HCT116 (cell line): ENCODE measurements at regions of chr1 and their contacts with region 1.

Region 1: DNA sequence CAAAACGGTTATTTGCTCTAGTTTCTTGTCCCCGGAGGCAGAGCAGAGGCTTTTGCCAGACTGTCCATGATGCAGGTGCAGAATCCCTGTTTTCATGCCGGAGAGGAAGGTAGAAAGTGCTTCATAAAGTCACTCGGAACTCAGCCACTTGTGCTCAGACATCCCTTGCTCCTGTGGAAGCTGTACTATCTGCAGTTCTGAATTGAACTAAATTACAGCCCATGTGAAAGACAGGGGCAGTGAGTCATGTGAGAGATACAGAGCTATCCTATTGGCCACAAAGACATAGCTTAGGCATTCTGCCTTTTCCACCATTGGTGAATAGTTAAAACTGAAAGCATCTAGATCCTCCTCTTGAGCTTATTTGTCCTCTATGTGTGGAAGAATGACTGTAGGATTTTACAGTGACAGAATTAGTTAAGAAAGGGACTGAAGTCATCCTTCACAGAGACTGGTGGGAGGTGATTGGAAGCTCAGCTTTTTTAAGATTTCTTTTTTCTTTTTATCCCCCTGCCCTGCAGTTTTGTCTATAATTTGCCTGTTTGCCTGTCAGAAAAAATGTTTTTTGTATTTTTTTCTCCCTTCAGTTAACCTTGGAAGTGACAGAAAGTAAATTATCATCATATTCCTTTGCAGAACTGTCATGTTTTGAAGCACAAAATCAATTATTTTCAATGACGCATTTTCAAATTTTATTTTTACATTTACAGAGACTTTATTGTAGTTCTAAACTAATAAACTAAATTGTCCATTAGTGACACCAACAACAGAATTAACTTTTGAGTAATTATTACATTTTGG is 298.6 kb downstream of the PTPRC start:
- DNase-seq: peak; percentile 76
- ATAC-seq: peak; percentile 77
- H3K4me3 ChIP-seq: peak overlapping the region; percentile 60 to 63
- H3K27ac ChIP-seq: peak overlapping the region; percentile 22; the same call in 1 of the 2 replicates
- H3K4me1 ChIP-seq: peaks cover 20 to 49% of the 10 kb centered on the region in 2 experiments
- H3K27me3 ChIP-seq: no peaks in the 10 kb centered on the region
- CTCF ChIP-seq: no peak
- POLR2A ChIP-seq: no peak
- RAD21 ChIP-seq: no peak

Region 2: GRCh38 chr1:198880818-198881597 is 56.4 kb before region 1 on chr1:
- CTCF ChIA-PET with region 1: no interaction called
- POLR2A ChIA-PET with region 1: interaction called, 4 read pairs
- RAD21 ChIA-PET with region 1: no interaction called
- intact Hi-C with region 1: loop called (anchors 1 kb)
- DNase-seq: peak; percentile 91
- ATAC-seq: peak; percentile 86
- H3K4me3 ChIP-seq: peak overlapping the region in 1 of 2 experiments; percentile 28; a peak in 1 of 4 replicates
- H3K27ac ChIP-seq: peak overlapping the region; percentile 67; the same call in 1 of the 2 replicates
- H3K4me1 ChIP-seq: peaks cover 17 to 25% of the 10 kb centered on the region in 2 experiments
- H3K27me3 ChIP-seq: no peaks in the 10 kb centered on the region
- CTCF ChIP-seq: no peak
- POLR2A ChIP-seq: no peak
- RAD21 ChIP-seq: peak; percentile 35; the same call in 1 of the 2 replicates

Region 3: DNA sequence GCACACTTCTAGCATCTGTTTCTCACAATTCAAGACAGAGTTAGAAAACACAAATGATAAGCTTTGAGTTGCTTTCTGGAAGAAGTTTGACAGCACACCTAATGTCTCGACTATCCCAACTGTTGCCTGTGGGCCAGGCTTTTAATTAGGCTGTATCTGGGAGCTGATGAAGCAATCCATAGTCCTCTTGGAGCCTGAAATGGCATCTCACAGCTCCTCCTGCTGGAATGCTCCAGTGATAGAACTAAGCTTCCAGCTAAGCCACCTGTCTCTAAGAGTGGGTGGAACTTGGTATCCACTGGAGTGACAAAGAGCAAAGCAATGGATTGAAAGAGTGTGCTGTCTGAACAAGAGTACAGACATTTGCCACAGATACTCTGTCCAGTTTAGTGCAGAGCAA is 484.8 kb after region 1 on chr1:
- CTCF ChIA-PET with region 1: no interaction called
- POLR2A ChIA-PET with region 1: no interaction called
- RAD21 ChIA-PET with region 1: no interaction called
- intact Hi-C with region 1: loop called (anchors 2 kb)
- DNase-seq: peak; percentile 40
- ATAC-seq: peak; percentile 94
- H3K4me3 ChIP-seq: no peak overlapping the region
- H3K27ac ChIP-seq: no peak overlapping the region
- H3K4me1 ChIP-seq: no peaks in the 10 kb centered on the region
- H3K27me3 ChIP-seq: no peaks in the 10 kb centered on the region
- CTCF ChIP-seq: peak; percentile 37 to 63 (median 54); a peak in 5 of 6 replicates
- POLR2A ChIP-seq: no peak
- RAD21 ChIP-seq: peak; percentile 71

Region 4: DNA sequence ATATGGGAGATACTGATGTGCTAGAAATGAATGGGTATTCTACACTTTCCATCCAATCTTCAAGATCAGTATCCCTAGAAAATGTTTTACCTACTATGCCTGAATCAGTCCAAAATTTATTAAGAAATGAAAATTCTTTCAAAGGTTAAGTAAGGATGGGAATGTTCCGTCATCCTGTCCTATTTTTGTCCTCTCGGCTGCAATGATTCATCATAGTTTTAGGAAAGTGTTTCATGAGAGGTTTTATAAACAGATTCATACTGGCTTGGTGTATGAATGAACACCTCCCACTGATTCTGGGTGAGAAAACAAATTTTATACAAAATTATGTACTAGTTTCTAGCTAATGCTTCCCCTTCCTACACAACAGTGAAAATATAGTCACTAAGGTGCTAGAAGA is 585.5 kb after region 1 on chr1:
- CTCF ChIA-PET with region 1: no interaction called
- POLR2A ChIA-PET with region 1: no interaction called
- RAD21 ChIA-PET with region 1: no interaction called
- intact Hi-C with region 1: no loop called
- DNase-seq: no peak
- ATAC-seq: no peak
- H3K4me3 ChIP-seq: no peak overlapping the region
- H3K27ac ChIP-seq: no peak overlapping the region
- H3K4me1 ChIP-seq: no peaks in the 10 kb centered on the region
- H3K27me3 ChIP-seq: no peaks in the 10 kb centered on the region
- CTCF ChIP-seq: no peak
- POLR2A ChIP-seq: no peak
- RAD21 ChIP-seq: no peak